Pancreas (tissue), 10 donors: ENCODE measurements at regions of chr11 and their contacts with region 1.

Region 1: DNA sequence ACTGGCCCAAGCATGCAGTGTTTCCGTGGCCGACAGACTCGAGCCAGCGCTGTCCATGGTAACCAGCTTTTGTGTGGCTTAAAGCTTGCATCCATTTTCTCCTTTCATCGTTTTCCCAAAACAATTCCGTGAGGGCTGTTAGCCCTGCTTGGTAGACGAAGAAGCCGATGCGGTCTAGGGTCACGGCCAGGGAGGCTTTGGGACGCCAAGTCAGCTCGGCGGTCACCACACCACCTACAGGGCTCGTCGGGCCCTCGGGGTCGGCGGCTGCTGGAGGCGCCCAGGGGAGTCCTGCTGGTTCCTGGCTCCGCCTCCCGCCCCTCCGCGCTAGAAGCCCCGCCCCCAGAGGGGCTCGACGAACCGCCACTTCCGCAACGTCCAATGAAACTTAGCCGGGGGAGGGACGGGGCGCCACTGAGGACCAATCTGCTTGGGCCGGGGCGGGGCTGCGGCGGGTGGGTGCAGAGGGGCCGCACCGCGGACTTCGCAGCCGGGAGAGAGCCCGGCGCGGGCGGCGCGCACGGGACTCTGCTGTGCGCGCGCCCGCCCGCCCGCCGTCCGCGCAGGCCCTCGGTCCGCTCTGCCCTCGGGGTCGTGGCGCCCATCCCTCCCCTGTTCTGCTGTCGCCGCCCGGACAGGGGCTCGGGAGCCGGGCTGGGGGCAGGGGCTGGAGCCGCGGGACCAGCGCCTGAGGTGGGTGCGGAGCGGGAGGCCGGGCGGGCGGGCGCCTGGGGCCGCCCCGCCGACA is at the start of gene TIGD3:
- DNase-seq: peak; percentile 97 to 99 (median 98)
- ATAC-seq: peak; percentile 94 to 96 (median 96)
- H3K4me3 ChIP-seq: peak within 1 kb of the TSS; percentile 52 to 88 (median 70)
- H3K27ac ChIP-seq: peak within 1 kb of the TSS in 3 of 4 donors; percentile 23 to 56 (median 29)
- H3K4me1 ChIP-seq: peaks cover 0 to 8% (median 5%) of the 10 kb centered on the region in 3 donors
- H3K27me3 ChIP-seq: no peaks in the 10 kb centered on the region
- CTCF ChIP-seq: no peak
- total RNA-seq, gene TIGD3: 0.06 to 0.16 (median 0.13) TPM in 4 of 6 donors, not detected in the others

Region 2: GRCh38 chr11:65454696-65455456 is 100.4 kb after region 1 on chr11:
- intact Hi-C with region 1: loop called in 1 of 3 experiments (anchors 10 kb)
- DNase-seq: peak; percentile 84 to 95 (median 88)
- ATAC-seq: peak; percentile 91 to 98 (median 98)
- H3K4me3 ChIP-seq: peak overlapping the region in 3 of 4 donors; percentile 8 to 43 (median 38)
- H3K27ac ChIP-seq: peak overlapping the region; percentile 6 to 45 (median 24)
- H3K4me1 ChIP-seq: peaks cover 0 to 3% (median 0%) of the 10 kb centered on the region in 3 donors
- H3K27me3 ChIP-seq: no peaks in the 10 kb centered on the region
- CTCF ChIP-seq: no peak

Region 3: DNA sequence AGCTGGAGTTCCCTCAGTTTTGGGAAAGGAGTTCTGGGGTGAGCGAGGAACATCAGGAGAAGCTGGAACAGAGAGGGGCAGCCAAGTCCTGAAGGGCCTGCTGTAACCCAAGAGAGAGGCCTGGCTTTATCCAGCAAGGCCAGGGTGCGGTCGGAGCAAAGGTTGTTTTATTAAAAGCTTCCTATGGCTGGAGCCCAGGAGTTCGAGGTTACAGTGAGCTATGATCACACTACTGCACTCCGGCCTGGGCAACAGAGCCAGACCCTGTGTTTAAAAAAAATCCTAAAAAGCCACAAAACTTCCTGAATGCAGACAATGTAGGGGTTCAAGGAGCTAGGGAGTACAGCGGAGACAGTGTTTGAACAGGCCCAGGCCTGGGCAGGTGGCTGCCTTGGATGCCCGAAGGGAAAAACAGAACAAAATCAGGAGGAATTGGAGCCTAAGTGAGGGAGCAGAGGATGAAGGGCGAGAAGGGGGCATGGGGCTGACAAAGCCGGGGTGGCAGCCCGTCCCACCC is 122.3 kb after region 1 on chr11:
- intact Hi-C with region 1: no loop called
- DNase-seq: peak in 2 of 6 donors; percentile 31 to 53
- ATAC-seq: peak in 3 of 4 donors; percentile 0 to 1 (median 0)
- H3K4me3 ChIP-seq: peak overlapping the region; percentile 67 to 90 (median 85)
- H3K27ac ChIP-seq: peak overlapping the region; percentile 96 to 99 (median 98)
- H3K4me1 ChIP-seq: peaks cover 30 to 37% (median 33%) of the 10 kb centered on the region in 3 donors
- H3K27me3 ChIP-seq: no peaks in the 10 kb centered on the region
- CTCF ChIP-seq: no peak

Region 4: GRCh38 chr11:65540297-65541092 is 186.1 kb after region 1 on chr11:
- intact Hi-C with region 1: no loop called
- DNase-seq: peak; percentile 88 to 97 (median 94)
- ATAC-seq: peak; percentile 86 to 95 (median 92)
- H3K4me3 ChIP-seq: peak overlapping the region; percentile 39 to 66 (median 47)
- H3K27ac ChIP-seq: peak overlapping the region; percentile 77 to 87 (median 80)
- H3K4me1 ChIP-seq: peaks cover 5 to 11% (median 7%) of the 10 kb centered on the region in 3 donors
- H3K27me3 ChIP-seq: no peaks in the 10 kb centered on the region
- CTCF ChIP-seq: peak; percentile 69 to 79 (median 76)